ENCODE measurements at regions of chr10 and their contacts with region 1.

Region 1: GRCh38 chr10:68156373-68157185 is 47.3 kb downstream of the MYPN start:
- DNase-seq: peak; percentile 57
- ATAC-seq: peak; percentile 67
- H3K4me3 ChIP-seq: no peak overlapping the region
- H3K27ac ChIP-seq: no peak overlapping the region
- H3K4me1 ChIP-seq: peaks cover 13% of the 10 kb centered on the region
- H3K27me3 ChIP-seq: no peaks in the 10 kb centered on the region
- CTCF ChIP-seq: peak; percentile 76
- EP300 ChIP-seq: no peak
- POLR2A ChIP-seq: no peak
- RAD21 ChIP-seq: peak; percentile 66; the same call in 1 of the 2 replicates

Region 2: DNA sequence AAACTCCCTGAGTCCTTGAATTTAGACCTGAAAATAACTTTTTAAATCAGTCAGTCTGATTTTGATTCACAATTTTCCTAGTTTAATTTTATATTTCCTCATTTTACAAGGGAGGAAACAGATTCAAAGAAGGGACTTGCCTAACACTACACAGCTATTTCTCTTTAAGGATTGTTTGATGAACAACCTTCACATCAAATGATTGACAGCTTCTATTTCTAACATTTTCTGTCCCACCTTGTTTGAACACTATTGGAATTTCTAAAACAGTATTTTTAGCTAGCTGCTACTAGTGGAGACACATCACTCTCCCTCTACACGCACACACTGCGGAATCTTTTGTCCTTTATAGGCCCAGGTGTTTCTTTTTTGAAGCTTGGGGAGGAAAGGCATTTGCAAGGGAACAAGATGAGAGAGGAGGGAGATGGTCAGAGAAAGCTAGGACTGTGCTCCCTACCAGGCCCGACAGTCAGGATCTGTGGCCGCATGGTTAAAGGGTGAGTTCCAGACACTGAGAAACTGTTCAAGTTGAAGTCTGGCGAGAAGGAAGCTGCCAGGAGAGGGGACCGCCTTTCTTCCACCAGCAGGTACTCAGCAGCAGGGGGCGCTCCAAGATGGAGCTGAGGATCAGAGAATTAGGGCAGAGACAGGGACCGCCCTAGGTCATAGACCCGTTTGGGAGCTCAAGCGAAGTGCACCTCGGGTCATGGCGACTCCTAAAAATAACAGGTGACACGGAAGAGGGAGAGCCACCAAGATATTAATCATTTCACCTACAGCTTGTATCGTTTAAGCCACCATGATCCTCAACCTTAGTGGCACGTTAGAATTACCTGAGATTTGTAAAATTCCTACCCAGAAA is 368.3 kb before region 1 on chr10:
- CTCF ChIA-PET with region 1: interaction called, 3 read pairs
- POLR2A ChIA-PET with region 1: no interaction called
- in situ Hi-C with region 1: no loop called
- intact Hi-C with region 1: loop called (anchors 1 kb)
- DNase-seq: peak; percentile 42
- ATAC-seq: peak; percentile 95
- H3K4me3 ChIP-seq: peak overlapping the region in 1 of 3 experiments; percentile 49; a peak in 4 of 6 replicates
- H3K27ac ChIP-seq: no peak overlapping the region
- H3K4me1 ChIP-seq: peaks cover 28% of the 10 kb centered on the region
- H3K27me3 ChIP-seq: no peaks in the 10 kb centered on the region
- CTCF ChIP-seq: peak; percentile 96
- EP300 ChIP-seq: no peak
- POLR2A ChIP-seq: no peak
- RAD21 ChIP-seq: peak; percentile 82

Region 3: DNA sequence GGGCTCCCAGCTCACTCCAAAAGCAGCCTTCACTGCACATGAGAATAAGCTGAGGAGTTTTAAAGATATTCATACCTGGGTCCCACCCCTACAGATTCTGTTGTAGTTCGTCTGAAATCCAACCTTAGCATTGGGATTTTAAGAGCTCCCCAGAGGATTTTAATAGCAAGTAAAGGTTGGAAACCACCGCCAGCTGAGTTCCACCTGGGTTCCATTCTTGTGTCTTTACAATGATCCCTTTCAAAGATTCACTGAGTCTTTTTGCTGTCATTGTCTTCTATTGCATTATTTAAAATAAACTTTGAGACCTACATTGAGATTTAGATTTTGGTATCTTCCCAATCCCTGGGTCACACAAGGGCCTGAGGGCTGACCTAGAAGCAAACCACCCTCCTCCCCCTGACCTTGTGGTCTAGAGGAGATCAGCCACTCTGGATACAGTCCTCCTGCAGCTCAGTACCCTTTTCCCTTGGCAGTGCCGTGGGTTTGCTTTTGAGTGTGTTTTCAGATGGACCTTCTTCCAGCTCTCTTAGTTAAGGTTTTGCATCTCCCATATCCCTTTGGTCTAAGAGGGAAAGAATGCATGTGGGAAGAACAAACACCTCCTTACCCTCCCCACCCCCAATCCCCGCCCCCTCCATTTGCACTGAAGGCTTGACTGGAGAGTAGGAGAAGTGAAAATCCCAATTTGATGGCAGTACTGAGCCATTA is 294.7 kb before region 1 on chr10:
- CTCF ChIA-PET with region 1: interaction called, 12 read pairs
- POLR2A ChIA-PET with region 1: no interaction called
- in situ Hi-C with region 1: no loop called
- intact Hi-C with region 1: no loop called
- DNase-seq: no peak
- ATAC-seq: peak; percentile 55; the same call in 2 of the 3 replicates
- H3K4me3 ChIP-seq: no peak overlapping the region
- H3K27ac ChIP-seq: no peak overlapping the region
- H3K4me1 ChIP-seq: peaks cover 4% of the 10 kb centered on the region; the same call in 1 of the 2 replicates
- H3K27me3 ChIP-seq: no peaks in the 10 kb centered on the region; a peak in 1 of 5 replicates
- CTCF ChIP-seq: no peak
- EP300 ChIP-seq: no peak
- POLR2A ChIP-seq: no peak
- RAD21 ChIP-seq: no peak

Region 4: DNA sequence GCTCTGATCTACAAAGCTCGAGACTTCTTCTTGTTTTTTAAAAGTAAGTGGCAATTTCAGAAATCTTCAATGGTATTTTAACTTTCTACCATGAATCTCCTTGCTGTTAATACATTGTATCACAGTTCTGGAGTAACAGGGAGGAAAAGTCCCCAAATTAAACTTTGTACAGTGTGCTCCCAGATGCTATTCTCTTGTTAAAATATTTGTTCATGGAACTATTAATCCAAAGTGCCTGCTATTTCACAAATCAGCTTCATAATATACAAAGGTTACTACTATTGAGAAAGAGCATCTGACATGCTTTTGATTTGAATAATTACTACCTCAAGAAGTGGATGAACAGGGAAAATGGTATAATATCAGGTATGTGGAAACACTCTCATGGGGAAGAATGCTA is 235.5 kb before region 1 on chr10:
- CTCF ChIA-PET with region 1: interaction called, 3 read pairs
- POLR2A ChIA-PET with region 1: no interaction called
- in situ Hi-C with region 1: no loop called
- intact Hi-C with region 1: loop called (anchors 2 kb)
- DNase-seq: no peak
- ATAC-seq: 0 out of 3 replicates have a peak, but pooled peaks have one; percentile 26
- H3K4me3 ChIP-seq: no peak overlapping the region
- H3K27ac ChIP-seq: no peak overlapping the region
- H3K4me1 ChIP-seq: peaks cover 9% of the 10 kb centered on the region
- H3K27me3 ChIP-seq: no peaks in the 10 kb centered on the region
- CTCF ChIP-seq: no peak
- EP300 ChIP-seq: no peak
- POLR2A ChIP-seq: no peak
- RAD21 ChIP-seq: no peak

Region 5: GRCh38 chr10:67976292-67977245 is 180.0 kb before region 1 on chr10:
- CTCF ChIA-PET with region 1: no interaction called
- POLR2A ChIA-PET with region 1: no interaction called
- in situ Hi-C with region 1: no loop called
- intact Hi-C with region 1: loop called (anchors 5 kb)
- DNase-seq: peak; percentile 13
- ATAC-seq: peak; percentile 87
- H3K4me3 ChIP-seq: no peak overlapping the region; a peak in 1 of 6 replicates
- H3K27ac ChIP-seq: peak overlapping the region; percentile 39
- H3K4me1 ChIP-seq: peaks cover 21% of the 10 kb centered on the region
- H3K27me3 ChIP-seq: no peaks in the 10 kb centered on the region
- CTCF ChIP-seq: no peak
- EP300 ChIP-seq: no peak
- POLR2A ChIP-seq: no peak
- RAD21 ChIP-seq: no peak

Region 6: DNA sequence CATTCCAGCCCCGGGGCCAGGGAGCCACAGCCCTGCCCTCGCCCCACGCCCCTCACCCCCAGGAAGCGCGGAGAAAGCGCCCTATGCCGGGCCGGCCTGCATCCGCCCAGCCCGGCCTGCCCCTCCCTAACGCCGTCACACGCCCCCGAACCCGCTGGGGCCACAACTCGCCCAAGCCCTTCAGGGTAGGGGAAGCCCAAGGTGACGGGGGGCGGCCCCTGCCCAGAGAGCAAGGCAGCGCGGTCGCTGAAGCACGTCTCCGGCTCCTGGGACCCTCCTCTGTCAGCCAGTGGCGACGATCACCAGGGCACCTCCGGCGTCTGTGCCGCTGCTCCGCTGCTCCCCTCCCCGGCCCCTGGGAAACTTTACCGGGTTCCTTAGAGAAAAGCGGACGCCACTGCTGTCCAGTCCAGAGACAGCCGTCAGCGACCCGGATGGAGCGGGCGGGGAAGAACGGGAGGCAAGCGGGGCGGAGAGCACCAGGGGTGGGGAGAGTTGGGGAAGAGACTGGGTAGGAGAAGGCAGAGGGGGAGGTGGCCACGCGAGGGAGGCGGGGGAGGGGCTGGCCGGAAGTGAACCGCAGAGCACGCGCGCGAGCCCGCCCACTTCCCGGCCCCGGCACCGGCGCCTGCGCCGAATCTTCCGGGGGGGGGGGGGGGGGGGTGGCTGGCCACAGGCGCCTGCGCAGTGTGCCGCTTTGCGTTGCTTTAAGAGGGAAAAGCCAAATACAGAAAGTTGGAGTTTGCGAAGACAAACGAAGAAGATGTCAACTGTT is 81.6 kb before region 1 on chr10 and contains the start of gene HERC4:
- CTCF ChIA-PET with region 1: no interaction called
- POLR2A ChIA-PET with region 1: no interaction called
- in situ Hi-C with region 1: no loop called
- intact Hi-C with region 1: loop called (anchors 1 kb)
- DNase-seq: peak; percentile 83
- ATAC-seq: peak; percentile 98
- H3K4me3 ChIP-seq: peak within 1 kb of the TSS; percentile 91 to 99 (median 94)
- H3K27ac ChIP-seq: peak within 1 kb of the TSS; percentile 96
- H3K4me1 ChIP-seq: peaks cover 37% of the 10 kb centered on the region
- H3K27me3 ChIP-seq: no peaks in the 10 kb centered on the region
- CTCF ChIP-seq: 0 out of 2 replicates have a peak, but pooled peaks have one; percentile 13
- EP300 ChIP-seq: peak in 1 of 2 experiments; percentile 32; a peak in 1 of 4 replicates
- POLR2A ChIP-seq: peak; percentile 56 to 67; a peak in 3 of 4 replicates
- RAD21 ChIP-seq: no peak; the same call in 1 of the 2 replicates
- total RNA-seq, gene HERC4: 20.0 and 20.2 TPM in 2 replicates